Upper lobe of right lung (tissue), 1 donor: ENCODE measurements at regions of chr6 and their contacts with region 1.

Region 1: DNA sequence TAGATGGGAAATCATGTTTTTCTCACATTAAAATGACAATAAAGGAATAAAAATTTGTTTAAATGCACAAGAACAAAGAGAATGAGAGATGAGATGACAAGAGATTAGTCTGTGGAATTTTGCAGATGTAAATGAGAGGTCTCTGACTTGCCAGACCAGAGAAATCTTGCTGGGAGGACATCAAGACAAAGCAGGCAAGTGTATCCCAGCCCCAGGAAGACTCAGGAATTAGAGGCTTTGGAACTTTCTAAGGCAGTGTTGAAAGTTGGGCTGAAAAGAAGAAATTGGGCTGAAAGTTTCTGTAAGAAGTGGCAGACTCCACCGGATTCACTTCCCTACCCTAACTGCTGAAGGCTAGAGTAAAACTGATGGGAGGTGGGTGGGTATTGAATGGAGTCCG is 54.6 kb downstream of the AFDN start:
- DNase-seq: no peak
- ATAC-seq: no peak
- H3K4me3 ChIP-seq: no peak overlapping the region
- H3K27ac ChIP-seq: no peak overlapping the region
- H3K4me1 ChIP-seq: no peaks in the 10 kb centered on the region
- H3K27me3 ChIP-seq: no peaks in the 10 kb centered on the region
- CTCF ChIP-seq: no peak

Region 2: GRCh38 chr6:167832497-167833395 is 48.6 kb before region 1 on chr6:
- intact Hi-C with region 1: loop called (anchors 10 kb)
- DNase-seq: no peak
- ATAC-seq: peak; percentile 72
- H3K4me3 ChIP-seq: peak overlapping the region; percentile 3
- H3K27ac ChIP-seq: peak overlapping the region; percentile 4
- H3K4me1 ChIP-seq: peaks cover 34% of the 10 kb centered on the region
- H3K27me3 ChIP-seq: no peaks in the 10 kb centered on the region
- CTCF ChIP-seq: no peak

Region 3: GRCh38 chr6:168050881-168051586 is 169.7 kb after region 1 on chr6:
- intact Hi-C with region 1: no loop called
- DNase-seq: no peak
- ATAC-seq: peak; percentile 5
- H3K4me3 ChIP-seq: no peak overlapping the region
- H3K27ac ChIP-seq: no peak overlapping the region
- H3K4me1 ChIP-seq: peaks cover 5% of the 10 kb centered on the region
- H3K27me3 ChIP-seq: no peaks in the 10 kb centered on the region
- CTCF ChIP-seq: peak; percentile 20